Transverse colon (tissue), 4 donors: ENCODE measurements at regions of chr6 and their contacts with region 1.

Region 1: GRCh38 chr6:168180548-168181011 is 101.6 kb upstream of the FRMD1 start:
- DNase-seq: no peak
- H3K4me3 ChIP-seq: no peak overlapping the region
- H3K27ac ChIP-seq: no peak overlapping the region
- H3K4me1 ChIP-seq: no peaks in the 10 kb centered on the region
- H3K27me3 ChIP-seq: no peaks in the 10 kb centered on the region
- CTCF ChIP-seq: no peak
- EP300 ChIP-seq: no peak
- POLR2A ChIP-seq: no peak

Region 2: GRCh38 chr6:167956983-167957492 is 223.5 kb before region 1 on chr6:
- in situ Hi-C with region 1: no loop called
- intact Hi-C with region 1: loop called (anchors 5 kb)
- DNase-seq: no peak
- H3K4me3 ChIP-seq: no peak overlapping the region
- H3K27ac ChIP-seq: no peak overlapping the region
- H3K4me1 ChIP-seq: peaks cover 0 to 14% (median 8%) of the 10 kb centered on the region in 4 donors
- H3K27me3 ChIP-seq: no peaks in the 10 kb centered on the region
- CTCF ChIP-seq: no peak
- EP300 ChIP-seq: no peak
- POLR2A ChIP-seq: no peak